HepG2 (cell line): ENCODE measurements at regions of chr2 and their contacts with region 1.

Region 1: GRCh38 chr2:70977605-70978205 is 725 bp upstream of the ANKRD53 start:
- DNase-seq: peak; percentile 36
- ATAC-seq: no peak
- H3K4me3 ChIP-seq: peak overlapping the region; percentile 29 to 75 (median 36); a peak in 5 of 6 replicates
- H3K27ac ChIP-seq: no peak overlapping the region
- H3K4me1 ChIP-seq: peaks cover 14% of the 10 kb centered on the region
- H3K27me3 ChIP-seq: no peaks in the 10 kb centered on the region
- CTCF ChIP-seq: no peak
- EP300 ChIP-seq: no peak
- POLR2A ChIP-seq: no peak
- RAD21 ChIP-seq: no peak

Region 2: DNA sequence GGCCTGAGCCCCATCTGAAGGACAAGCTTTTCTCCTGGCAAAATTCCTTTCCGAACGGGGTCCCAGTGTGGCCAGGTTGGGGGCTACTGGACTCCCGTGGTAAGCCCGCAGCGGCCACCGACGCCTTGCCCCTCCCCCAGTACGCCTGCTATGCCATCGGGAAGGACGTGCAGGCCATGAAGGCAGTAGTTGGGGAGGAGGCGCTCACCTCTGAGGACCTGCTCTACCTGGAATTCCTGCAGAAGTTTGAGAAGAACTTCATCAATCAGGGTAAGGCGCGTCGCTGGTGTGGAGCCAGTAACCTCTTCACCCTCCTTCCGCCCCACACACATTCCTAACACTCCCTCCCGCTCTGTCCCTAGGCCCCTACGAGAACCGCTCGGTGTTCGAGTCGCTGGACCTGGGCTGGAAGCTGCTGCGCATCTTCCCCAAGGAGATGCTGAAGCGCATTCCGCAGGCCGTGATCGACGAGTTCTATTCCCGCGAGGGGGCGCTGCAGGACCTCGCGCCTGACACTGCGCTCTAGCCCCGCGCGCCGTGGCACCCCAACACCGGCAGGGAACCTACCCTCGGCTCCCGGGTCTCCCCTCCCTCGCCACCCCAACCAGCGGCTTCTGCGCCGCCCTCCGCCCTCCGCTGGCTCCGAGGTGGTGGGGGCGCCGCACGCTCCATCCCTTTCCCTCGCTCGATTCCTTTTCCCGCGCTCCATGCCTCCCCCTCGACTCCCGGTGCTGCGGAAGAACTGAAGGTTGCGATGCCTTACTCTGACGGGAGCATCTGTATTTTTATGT is 12.9 kb before region 1 on chr2:
- CTCF ChIA-PET with region 1: interaction called, 34 read pairs
- POLR2A ChIA-PET with region 1: interaction called, 6 read pairs
- in situ Hi-C with region 1: no loop called
- intact Hi-C with region 1: loop called (anchors 1 kb)
- DNase-seq: peak; percentile 22
- ATAC-seq: peak; percentile 81
- H3K4me3 ChIP-seq: peak overlapping the region; percentile 41 to 62 (median 54); a peak in 5 of 6 replicates
- H3K27ac ChIP-seq: no peak overlapping the region
- H3K4me1 ChIP-seq: 0 out of 2 replicates have a peak, but pooled peaks cover 5% of the 10 kb centered on the region
- H3K27me3 ChIP-seq: no peaks in the 10 kb centered on the region; a peak in 2 of 5 replicates
- CTCF ChIP-seq: peak; percentile 96
- EP300 ChIP-seq: no peak
- POLR2A ChIP-seq: no peak
- RAD21 ChIP-seq: peak; percentile 82

Region 3: DNA sequence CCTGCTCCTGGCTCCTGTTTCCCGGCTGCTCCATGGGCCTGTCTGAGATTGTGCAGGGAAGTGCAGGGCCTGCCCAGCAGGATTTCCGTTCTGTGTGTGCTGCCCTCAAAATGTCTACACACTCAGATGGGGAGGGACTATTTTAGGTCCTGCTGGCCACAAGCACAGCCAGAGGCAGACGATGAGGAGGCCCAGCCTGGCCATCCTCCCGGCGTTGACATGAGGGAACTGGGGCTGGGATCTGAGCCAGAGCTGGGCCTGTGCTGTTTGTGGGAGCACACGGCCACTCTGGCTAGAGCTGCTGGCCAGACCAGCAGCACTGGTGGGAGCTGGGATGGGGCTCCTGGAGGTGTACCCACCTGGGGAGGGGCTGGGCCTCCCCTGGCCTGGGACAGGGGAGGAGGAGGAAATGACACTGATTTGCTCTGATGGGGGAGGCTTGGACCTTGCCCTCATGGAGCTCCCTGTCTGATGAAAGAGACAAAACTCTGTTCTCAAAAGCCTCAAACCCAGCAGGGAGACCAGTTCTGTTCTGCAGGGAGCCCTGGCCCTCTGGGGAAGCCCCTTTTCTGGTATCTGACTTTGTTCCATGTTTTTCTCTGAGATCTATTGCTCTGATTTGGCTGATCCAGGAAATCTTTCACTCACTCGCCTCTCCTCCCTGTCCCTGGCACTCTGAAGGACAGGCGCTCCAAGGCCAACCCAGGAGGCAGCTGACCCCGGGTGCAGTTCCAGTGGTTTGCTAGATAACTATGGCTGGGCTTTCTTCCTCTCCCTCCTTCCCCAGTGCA is 637.5 kb after region 1 on chr2:
- CTCF ChIA-PET with region 1: no interaction called
- POLR2A ChIA-PET with region 1: no interaction called
- in situ Hi-C with region 1: no loop called
- intact Hi-C with region 1: no loop called
- DNase-seq: peak; percentile 18
- ATAC-seq: peak; percentile 73
- H3K4me3 ChIP-seq: peak overlapping the region in 1 of 3 experiments; percentile 27; a peak in 2 of 6 replicates
- H3K27ac ChIP-seq: peak overlapping the region; percentile 13
- H3K4me1 ChIP-seq: peaks cover 27% of the 10 kb centered on the region
- H3K27me3 ChIP-seq: no peaks in the 10 kb centered on the region; a peak in 1 of 5 replicates
- CTCF ChIP-seq: no peak
- EP300 ChIP-seq: no peak
- POLR2A ChIP-seq: no peak
- RAD21 ChIP-seq: no peak